Caco-2 (cell line): ENCODE measurements at regions of chr7 and their contacts with region 1.

Region 1: DNA sequence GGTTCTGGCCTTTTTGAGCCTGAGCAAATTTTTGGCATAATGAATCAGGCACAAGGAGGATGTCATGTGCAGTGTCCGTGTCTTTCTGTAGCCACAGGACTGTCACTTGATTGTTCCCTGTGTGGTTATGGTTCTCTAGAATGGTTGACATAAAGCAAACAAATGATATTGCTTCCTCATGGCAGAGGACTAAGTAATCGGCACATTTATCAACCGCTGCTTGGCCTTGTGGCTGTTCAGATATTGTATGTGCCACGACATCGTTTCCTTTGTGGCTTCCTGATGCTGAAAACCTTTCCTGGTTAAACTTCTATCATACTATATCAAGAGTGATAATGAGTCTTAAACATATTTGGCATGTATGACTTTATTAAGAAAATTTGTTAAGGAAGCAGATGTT is 598.8 kb downstream of the SUGCT start:
- DNase-seq: peak in 1 of 2 experiments; percentile 33
- H3K4me3 ChIP-seq: no peak overlapping the region
- H3K4me3 Mint-ChIP-seq: peak overlapping the region; percentile 51
- H3K27ac Mint-ChIP-seq: peak overlapping the region; percentile 48
- H3K4me1 ChIP-seq: peaks cover 31% of the 10 kb centered on the region
- H3K4me1 Mint-ChIP-seq: peaks cover 20% of the 10 kb centered on the region
- H3K27me3 ChIP-seq: no peaks in the 10 kb centered on the region
- H3K27me3 Mint-ChIP-seq: no peaks in the 10 kb centered on the region
- CTCF ChIP-seq: no peak

Region 2: GRCh38 chr7:40622941-40623501 is 110.6 kb before region 1 on chr7:
- CTCF ChIA-PET with region 1: no interaction called
- POLR2A ChIA-PET with region 1: no interaction called
- intact Hi-C with region 1: loop called (anchors 10 kb)
- DNase-seq: no peak
- H3K4me3 ChIP-seq: no peak overlapping the region
- H3K4me3 Mint-ChIP-seq: no peak overlapping the region
- H3K27ac Mint-ChIP-seq: peak overlapping the region; percentile 31
- H3K4me1 ChIP-seq: peaks cover 22% of the 10 kb centered on the region; the same call in 1 of the 2 replicates
- H3K4me1 Mint-ChIP-seq: peaks cover 26% of the 10 kb centered on the region
- H3K27me3 ChIP-seq: no peaks in the 10 kb centered on the region
- H3K27me3 Mint-ChIP-seq: no peaks in the 10 kb centered on the region
- CTCF ChIP-seq: no peak

Region 3: GRCh38 chr7:41133690-41134299 is 400.2 kb after region 1 on chr7:
- CTCF ChIA-PET with region 1: no interaction called
- POLR2A ChIA-PET with region 1: no interaction called
- intact Hi-C with region 1: no loop called
- DNase-seq: no peak
- H3K4me3 ChIP-seq: no peak overlapping the region
- H3K4me3 Mint-ChIP-seq: no peak overlapping the region
- H3K27ac Mint-ChIP-seq: no peak overlapping the region
- H3K4me1 ChIP-seq: no peaks in the 10 kb centered on the region
- H3K4me1 Mint-ChIP-seq: no peaks in the 10 kb centered on the region
- H3K27me3 ChIP-seq: no peaks in the 10 kb centered on the region
- H3K27me3 Mint-ChIP-seq: no peaks in the 10 kb centered on the region
- CTCF ChIP-seq: no peak

Region 4: GRCh38 chr7:41238851-41239331 is 505.3 kb after region 1 on chr7:
- CTCF ChIA-PET with region 1: no interaction called
- POLR2A ChIA-PET with region 1: no interaction called
- intact Hi-C with region 1: loop called (anchors 10 kb)
- DNase-seq: no peak
- H3K4me3 ChIP-seq: no peak overlapping the region
- H3K4me3 Mint-ChIP-seq: no peak overlapping the region
- H3K27ac Mint-ChIP-seq: no peak overlapping the region
- H3K4me1 ChIP-seq: peaks cover 55% of the 10 kb centered on the region
- H3K4me1 Mint-ChIP-seq: peaks cover 51% of the 10 kb centered on the region
- H3K27me3 ChIP-seq: no peaks in the 10 kb centered on the region
- H3K27me3 Mint-ChIP-seq: no peaks in the 10 kb centered on the region
- CTCF ChIP-seq: no peak